ENCODE measurements at regions of chr1 and their contacts with region 1.

Region 1: GRCh38 chr1:23772049-23772853 is 6.0 kb upstream of the PITHD1 start:
- DNase-seq: no peak
- H3K4me3 ChIP-seq: no peak overlapping the region
- CTCF ChIP-seq: peak; percentile 98

Region 2: DNA sequence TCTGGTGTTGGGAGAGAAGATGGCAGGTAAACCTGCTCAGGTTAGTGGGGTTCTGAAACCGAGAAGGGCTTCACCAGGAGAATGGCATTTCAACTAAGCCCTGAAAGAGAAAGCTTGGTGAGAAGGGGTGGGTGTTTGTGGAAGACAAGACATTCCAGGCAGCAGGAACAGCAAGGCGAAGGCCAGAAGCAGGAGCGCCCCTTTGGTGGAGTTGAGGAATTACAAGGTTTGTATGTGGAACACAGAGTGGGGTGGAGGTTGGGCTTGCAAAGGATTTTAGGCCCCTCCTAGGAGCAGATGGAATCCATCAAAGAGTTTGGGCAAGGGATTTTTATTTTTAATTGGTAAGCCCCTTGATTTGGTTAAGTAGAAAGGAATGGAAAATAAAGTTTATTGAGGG is 53.8 kb before region 1 on chr1:
- CTCF ChIA-PET with region 1: no interaction called
- POLR2A ChIA-PET with region 1: no interaction called
- DNase-seq: no peak
- H3K4me3 ChIP-seq: no peak overlapping the region
- CTCF ChIP-seq: peak; percentile 54

Region 3: GRCh38 chr1:23751050-23751814 is 21.0 kb before region 1 on chr1:
- CTCF ChIA-PET with region 1: interaction called, 26 read pairs
- POLR2A ChIA-PET with region 1: interaction called, 3 read pairs
- DNase-seq: no peak
- H3K4me3 ChIP-seq: no peak overlapping the region
- CTCF ChIP-seq: peak; percentile 66

Region 4: DNA sequence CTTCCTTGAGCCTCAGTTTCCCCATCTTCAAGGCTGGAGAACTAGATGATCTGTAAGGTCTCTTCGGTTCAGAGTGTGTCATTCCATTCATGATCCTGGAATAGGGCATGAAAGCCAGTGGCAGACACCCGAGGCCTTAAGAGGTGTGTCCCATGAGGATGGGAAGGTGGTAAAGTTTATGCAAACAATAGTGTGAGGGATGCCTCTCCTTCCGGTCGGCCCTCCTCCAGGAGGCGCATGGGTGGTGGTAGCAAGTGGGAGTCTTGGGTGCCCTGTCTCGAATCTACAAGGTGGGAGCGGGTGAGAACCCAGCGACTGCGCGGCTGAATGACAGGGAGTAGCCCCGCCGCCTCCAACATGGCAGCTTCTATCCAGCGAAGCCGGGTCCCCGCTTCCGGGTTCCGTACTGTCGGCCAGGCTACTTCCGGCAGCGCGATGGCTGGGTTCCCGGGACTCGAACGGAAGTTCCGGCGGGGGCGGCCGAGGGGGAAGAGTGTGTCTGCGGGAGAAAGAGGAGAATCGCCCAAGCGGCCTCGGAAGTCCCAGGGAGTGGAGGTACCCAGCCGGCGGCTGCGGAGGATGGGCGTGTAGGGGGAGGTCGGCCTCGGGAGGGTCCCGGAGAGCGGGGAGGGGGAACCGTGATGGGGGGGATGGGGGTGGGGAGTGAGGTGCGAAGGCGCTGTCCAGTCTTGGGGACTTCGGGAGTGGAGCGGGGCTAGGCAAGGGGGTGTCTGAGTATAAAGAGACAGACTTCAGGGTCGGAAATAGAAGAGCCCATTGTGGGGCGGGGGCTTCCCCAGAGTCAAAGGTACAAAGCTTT is 18.7 kb after region 1 on chr1 and contains the start of gene LYPLA2:
- CTCF ChIA-PET with region 1: interaction called, 10 read pairs
- POLR2A ChIA-PET with region 1: interaction called, 4 read pairs
- DNase-seq: no peak
- H3K4me3 ChIP-seq: peak within 1 kb of the TSS; percentile 90
- CTCF ChIP-seq: no peak

Region 5: DNA sequence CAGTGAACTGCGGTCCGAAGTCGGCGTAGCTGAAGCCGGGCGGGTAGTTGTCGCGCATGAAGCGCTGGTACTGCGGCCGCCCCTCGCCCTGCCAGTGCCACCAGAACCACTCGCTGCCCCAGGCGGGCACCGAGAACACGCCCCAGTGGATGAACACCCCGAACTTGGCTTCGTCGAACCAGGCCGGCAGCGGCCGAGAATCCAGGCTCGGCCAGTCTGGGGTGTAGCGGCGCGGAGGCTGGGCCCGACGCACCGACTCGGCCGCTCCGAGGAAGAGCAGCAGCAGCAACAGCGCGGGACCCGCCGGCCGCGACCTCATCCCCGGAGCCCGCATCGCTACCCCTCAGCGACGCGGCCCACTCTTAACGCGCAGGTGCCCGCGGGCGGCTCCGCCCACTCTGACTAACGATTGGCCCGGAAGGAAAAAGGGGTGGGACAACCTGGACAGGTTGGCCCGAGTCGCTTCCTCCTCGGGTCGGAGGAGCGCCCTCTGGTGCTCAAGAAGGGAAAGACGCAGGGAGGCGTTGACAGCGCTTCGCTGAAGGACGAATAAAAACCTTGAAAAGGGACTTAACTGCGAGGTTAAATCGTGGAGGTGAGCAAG is 95.8 kb after region 1 on chr1 and contains the start of gene FUCA1:
- CTCF ChIA-PET with region 1: interaction called, 27 read pairs
- POLR2A ChIA-PET with region 1: no interaction called
- DNase-seq: no peak
- H3K4me3 ChIP-seq: peak within 1 kb of the TSS; percentile 67
- CTCF ChIP-seq: peak; percentile 87

Region 6: DNA sequence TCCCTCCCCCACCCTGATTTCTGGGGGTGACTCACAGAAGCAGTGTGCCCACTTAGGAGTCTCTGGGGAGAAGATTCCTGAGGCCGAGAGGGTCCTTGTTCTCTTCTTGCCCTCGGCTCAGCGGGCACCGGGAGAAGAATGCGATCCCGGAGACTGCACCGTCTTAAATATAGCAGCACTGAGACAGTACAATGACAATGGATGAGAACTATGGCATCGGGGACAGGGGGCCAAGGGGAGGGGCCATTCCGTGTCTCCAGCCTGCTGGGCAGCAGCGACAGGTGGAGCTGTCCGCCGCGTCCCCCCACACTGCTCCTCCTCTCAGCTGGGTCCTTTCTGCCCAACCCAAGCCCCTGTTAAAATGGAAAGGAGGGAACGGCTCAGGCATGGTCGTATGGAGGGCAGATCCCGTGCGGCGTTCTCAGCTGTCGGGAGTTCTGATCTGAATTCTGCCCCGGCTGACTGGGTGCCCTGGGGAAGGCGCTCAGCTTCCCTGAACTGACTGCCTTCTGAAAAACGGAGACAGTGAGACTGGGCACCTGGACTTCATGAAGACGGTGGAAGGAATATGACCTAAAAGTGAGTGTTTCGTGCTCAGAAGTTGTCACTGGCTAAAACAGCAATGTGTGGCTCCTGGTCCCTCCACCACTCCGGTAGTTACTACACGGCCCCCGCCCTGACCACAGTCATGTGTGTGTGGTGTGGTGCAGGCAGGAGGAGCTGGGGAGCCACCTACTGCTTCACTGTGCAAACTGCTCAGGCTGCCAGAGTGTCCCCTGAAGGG is 339.9 kb after region 1 on chr1 and contains the start of gene MYOM3:
- CTCF ChIA-PET with region 1: interaction called, 10 read pairs
- POLR2A ChIA-PET with region 1: no interaction called
- DNase-seq: no peak
- H3K4me3 ChIP-seq: peak within 1 kb of the TSS; percentile 32
- CTCF ChIP-seq: peak; percentile 65

Measured in AG04449 (cell line).